ENCODE measurements at regions of chr12 and their contacts with region 1.

Region 1: DNA sequence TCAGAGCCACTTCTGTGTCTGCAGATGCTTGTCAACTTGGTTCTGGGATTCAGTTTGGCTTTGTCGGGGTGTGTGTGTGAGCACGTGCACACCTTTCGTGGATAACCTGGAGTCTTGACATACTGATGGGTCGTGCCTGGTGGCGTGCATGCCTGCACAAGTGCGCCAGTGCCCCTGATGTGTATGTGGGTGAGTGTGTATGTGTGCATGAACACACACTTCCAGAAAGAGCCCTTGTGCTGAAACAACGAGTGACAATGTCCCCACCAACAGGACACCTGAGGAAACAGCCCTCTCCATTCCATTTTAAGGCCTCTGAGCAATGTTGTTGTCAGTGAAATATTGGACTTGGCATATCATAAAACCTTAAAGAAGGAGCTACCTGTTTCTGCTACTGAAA is 53.9 kb downstream of the SMUG1 start:
- DNase-seq: peak; percentile 57 to 62
- H3K4me3 ChIP-seq: no peak overlapping the region
- H3K4me3 Mint-ChIP-seq: peak overlapping the region; percentile 14
- H3K27ac Mint-ChIP-seq: peak overlapping the region; percentile 71
- H3K4me1 ChIP-seq: peaks cover 80% of the 10 kb centered on the region
- H3K4me1 Mint-ChIP-seq: peaks cover 36% of the 10 kb centered on the region
- H3K27me3 ChIP-seq: no peaks in the 10 kb centered on the region
- H3K27me3 Mint-ChIP-seq: no peaks in the 10 kb centered on the region
- CTCF ChIP-seq: peak; percentile 37 to 57

Region 2: DNA sequence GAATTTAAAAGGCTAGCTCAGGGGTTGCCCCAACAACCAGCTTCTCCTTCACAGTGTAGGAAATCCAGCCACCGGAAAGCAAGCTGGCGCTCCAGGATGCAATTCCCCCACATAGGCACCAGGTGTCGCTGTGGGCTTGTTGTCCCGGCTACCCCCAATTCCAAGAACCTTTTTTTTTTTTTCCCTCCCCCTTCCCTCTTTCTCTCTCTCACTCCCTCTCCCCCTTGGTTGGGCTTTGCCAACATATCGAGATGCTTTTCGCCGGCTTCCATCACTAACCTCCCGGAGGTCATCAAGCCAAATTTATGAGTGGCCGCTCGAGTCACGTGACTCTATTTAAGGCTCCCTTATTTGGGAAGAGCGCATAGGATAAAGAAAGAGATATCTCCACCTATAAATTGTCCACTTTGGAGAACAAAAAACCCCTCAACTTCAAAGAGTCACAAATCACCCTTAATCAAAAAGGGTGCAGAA is 102.2 kb before region 1 on chr12 and contains the start of gene HOXC5:
- CTCF ChIA-PET with region 1: interaction called, 50 read pairs
- POLR2A ChIA-PET with region 1: interaction called, 5 read pairs
- intact Hi-C with region 1: loop called (anchors 1 kb)
- DNase-seq: peak; percentile 83 to 86
- H3K4me3 ChIP-seq: peak within 1 kb of the TSS; percentile 52
- H3K4me3 Mint-ChIP-seq: peak within 1 kb of the TSS; percentile 89
- H3K27ac Mint-ChIP-seq: peak within 1 kb of the TSS; percentile 90
- H3K4me1 ChIP-seq: peaks cover 9% of the 10 kb centered on the region
- H3K4me1 Mint-ChIP-seq: peaks cover 10% of the 10 kb centered on the region
- H3K27me3 ChIP-seq: no peaks in the 10 kb centered on the region
- H3K27me3 Mint-ChIP-seq: no peaks in the 10 kb centered on the region
- CTCF ChIP-seq: peak; percentile 96 to 97
- total RNA-seq, gene HOXC5: 3.4 and 3.6 TPM in 2 replicates

Region 3: DNA sequence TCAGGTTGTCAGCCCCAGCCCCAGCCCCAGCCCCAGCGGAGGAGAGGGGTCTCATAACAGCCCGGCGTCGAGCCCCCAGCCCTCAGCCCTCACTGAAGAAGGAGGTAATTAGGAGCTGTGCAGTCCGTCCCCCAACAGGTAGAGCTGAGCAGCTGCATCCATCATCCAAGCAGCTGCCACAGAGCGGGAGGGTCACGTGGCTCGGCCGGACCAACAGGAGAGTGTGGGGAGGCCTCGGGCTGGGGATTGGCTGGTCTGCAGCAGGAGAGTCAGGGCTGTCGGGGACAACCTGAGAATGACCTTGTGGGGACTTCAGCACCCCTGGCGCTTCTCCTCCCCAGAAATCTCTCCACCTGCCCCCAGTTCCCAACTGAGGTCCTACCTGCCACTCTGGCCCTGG is 24.3 kb after region 1 on chr12:
- CTCF ChIA-PET with region 1: interaction called, 21 read pairs
- POLR2A ChIA-PET with region 1: no interaction called
- intact Hi-C with region 1: loop called (anchors 1 kb)
- DNase-seq: peak; percentile 81 to 86
- H3K4me3 ChIP-seq: no peak overlapping the region
- H3K4me3 Mint-ChIP-seq: peak overlapping the region; percentile 44
- H3K27ac Mint-ChIP-seq: peak overlapping the region; percentile 37
- H3K4me1 ChIP-seq: peaks cover 18% of the 10 kb centered on the region
- H3K4me1 Mint-ChIP-seq: peaks cover 11% of the 10 kb centered on the region
- H3K27me3 ChIP-seq: no peaks in the 10 kb centered on the region
- H3K27me3 Mint-ChIP-seq: no peaks in the 10 kb centered on the region
- CTCF ChIP-seq: peak in 1 of 2 experiments; percentile 39

Region 4: GRCh38 chr12:54191550-54192022 is 56.7 kb after region 1 on chr12:
- CTCF ChIA-PET with region 1: interaction called, 44 read pairs
- POLR2A ChIA-PET with region 1: no interaction called
- intact Hi-C with region 1: loop called (anchors 1 kb)
- DNase-seq: peak; percentile 86 to 87
- H3K4me3 ChIP-seq: no peak overlapping the region
- H3K4me3 Mint-ChIP-seq: no peak overlapping the region
- H3K27ac Mint-ChIP-seq: no peak overlapping the region
- H3K4me1 ChIP-seq: peaks cover 37% of the 10 kb centered on the region
- H3K4me1 Mint-ChIP-seq: peaks cover 16% of the 10 kb centered on the region
- H3K27me3 ChIP-seq: no peaks in the 10 kb centered on the region
- H3K27me3 Mint-ChIP-seq: no peaks in the 10 kb centered on the region
- CTCF ChIP-seq: peak; percentile 74 to 80

Region 5: DNA sequence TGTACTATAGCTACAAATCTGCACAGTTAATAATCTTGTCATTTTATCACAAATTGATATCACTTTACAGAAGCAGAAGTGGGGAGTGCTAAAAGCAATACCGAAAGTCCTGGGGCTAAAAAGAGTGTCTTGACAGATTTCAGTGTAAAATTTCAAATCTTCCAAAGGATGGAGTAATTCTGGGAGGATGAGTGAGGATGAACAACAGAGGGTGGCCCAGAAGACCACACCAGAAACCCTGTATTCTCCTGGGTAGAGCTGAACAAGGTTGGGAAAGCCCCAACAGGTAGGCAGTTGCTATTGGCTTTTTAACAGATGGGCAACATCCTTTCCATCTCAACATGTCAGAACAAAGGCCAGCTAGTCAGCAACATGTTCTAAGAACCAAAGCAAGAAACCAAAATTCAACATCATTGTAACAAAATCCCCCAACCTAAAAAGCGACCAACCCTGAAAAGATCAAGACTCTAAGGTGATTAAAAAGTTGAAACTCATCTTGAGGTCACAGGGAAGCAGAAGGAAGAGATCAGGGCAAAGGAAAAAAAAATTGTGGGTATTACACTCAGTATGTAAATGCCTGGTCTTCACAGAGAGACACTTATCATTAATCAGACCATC is 106.2 kb after region 1 on chr12:
- CTCF ChIA-PET with region 1: no interaction called
- POLR2A ChIA-PET with region 1: no interaction called
- intact Hi-C with region 1: no loop called
- DNase-seq: no peak
- H3K4me3 ChIP-seq: no peak overlapping the region
- H3K4me3 Mint-ChIP-seq: no peak overlapping the region
- H3K27ac Mint-ChIP-seq: no peak overlapping the region
- H3K4me1 ChIP-seq: no peaks in the 10 kb centered on the region
- H3K4me1 Mint-ChIP-seq: no peaks in the 10 kb centered on the region
- H3K27me3 ChIP-seq: no peaks in the 10 kb centered on the region
- H3K27me3 Mint-ChIP-seq: no peaks in the 10 kb centered on the region
- CTCF ChIP-seq: no peak